CD8-positive, alpha-beta T cell (primary cell): ENCODE measurements at regions of chr16 and their contacts with region 1.

Region 1: GRCh38 chr16:67183627-67184328 is at the start of gene MATCAP1:
- DNase-seq: peak; percentile 84 to 98 (median 92)
- ATAC-seq: peak; percentile 96
- H3K4me3 ChIP-seq: peak within 1 kb of the TSS; percentile 65 to 76
- H3K4me3 Mint-ChIP-seq: no peak within 1 kb of the TSS
- H3K27ac ChIP-seq: peak within 1 kb of the TSS; percentile 84 to 95
- H3K27ac Mint-ChIP-seq: no peak within 1 kb of the TSS
- H3K4me1 ChIP-seq: peaks cover 20% of the 10 kb centered on the region
- H3K4me1 Mint-ChIP-seq: peaks cover 17% of the 10 kb centered on the region
- H3K27me3 ChIP-seq: peaks cover 0 to 2% of the 10 kb centered on the region in 2 experiments
- H3K27me3 Mint-ChIP-seq: peaks cover 10% of the 10 kb centered on the region
- CTCF ChIP-seq: no peak
- total RNA-seq, gene MATCAP1: 7.7 to 8.0 TPM

Region 2: GRCh38 chr16:66954097-66954659 is 229.6 kb before region 1 on chr16:
- CTCF ChIA-PET with region 1: interaction called, 9 read pairs
- POLR2A ChIA-PET with region 1: no interaction called
- intact Hi-C with region 1: loop called (anchors 1 kb)
- DNase-seq: peak; percentile 56 to 81 (median 74)
- ATAC-seq: peak; percentile 91
- H3K4me3 ChIP-seq: no peak overlapping the region
- H3K4me3 Mint-ChIP-seq: no peak overlapping the region
- H3K27ac ChIP-seq: no peak overlapping the region
- H3K27ac Mint-ChIP-seq: no peak overlapping the region
- H3K4me1 ChIP-seq: peaks cover under 1% of the 10 kb centered on the region
- H3K4me1 Mint-ChIP-seq: peaks cover 6% of the 10 kb centered on the region
- H3K27me3 ChIP-seq: peaks cover 2 to 7% of the 10 kb centered on the region in 2 experiments
- H3K27me3 Mint-ChIP-seq: peaks cover 37% of the 10 kb centered on the region
- CTCF ChIP-seq: peak; percentile 85

Region 3: GRCh38 chr16:67017810-67018488 is 165.8 kb before region 1 on chr16:
- CTCF ChIA-PET with region 1: interaction called, 14 read pairs
- POLR2A ChIA-PET with region 1: interaction called, 3 read pairs
- intact Hi-C with region 1: loop called (anchors 2 kb)
- DNase-seq: peak; percentile 67 to 89 (median 85)
- ATAC-seq: peak; percentile 89
- H3K4me3 ChIP-seq: no peak overlapping the region
- H3K4me3 Mint-ChIP-seq: no peak overlapping the region
- H3K27ac ChIP-seq: no peak overlapping the region
- H3K27ac Mint-ChIP-seq: no peak overlapping the region
- H3K4me1 ChIP-seq: peaks cover 15% of the 10 kb centered on the region
- H3K4me1 Mint-ChIP-seq: no peaks in the 10 kb centered on the region
- H3K27me3 ChIP-seq: peaks cover 0 to 18% of the 10 kb centered on the region in 2 experiments
- H3K27me3 Mint-ChIP-seq: no peaks in the 10 kb centered on the region
- CTCF ChIP-seq: peak; percentile 63

Region 4: GRCh38 chr16:67104061-67104460 is 79.7 kb before region 1 on chr16:
- CTCF ChIA-PET with region 1: interaction called, 15 read pairs
- POLR2A ChIA-PET with region 1: no interaction called
- intact Hi-C with region 1: loop called in 1 of 2 experiments (anchors 2 kb)
- DNase-seq: peak in 2 of 9 experiments; percentile 9 to 10
- ATAC-seq: no peak
- H3K4me3 ChIP-seq: no peak overlapping the region
- H3K4me3 Mint-ChIP-seq: no peak overlapping the region
- H3K27ac ChIP-seq: no peak overlapping the region
- H3K27ac Mint-ChIP-seq: no peak overlapping the region
- H3K4me1 ChIP-seq: peaks cover 3% of the 10 kb centered on the region
- H3K4me1 Mint-ChIP-seq: no peaks in the 10 kb centered on the region
- H3K27me3 ChIP-seq: no peaks in the 10 kb centered on the region
- H3K27me3 Mint-ChIP-seq: no peaks in the 10 kb centered on the region
- CTCF ChIP-seq: no peak

Region 5: DNA sequence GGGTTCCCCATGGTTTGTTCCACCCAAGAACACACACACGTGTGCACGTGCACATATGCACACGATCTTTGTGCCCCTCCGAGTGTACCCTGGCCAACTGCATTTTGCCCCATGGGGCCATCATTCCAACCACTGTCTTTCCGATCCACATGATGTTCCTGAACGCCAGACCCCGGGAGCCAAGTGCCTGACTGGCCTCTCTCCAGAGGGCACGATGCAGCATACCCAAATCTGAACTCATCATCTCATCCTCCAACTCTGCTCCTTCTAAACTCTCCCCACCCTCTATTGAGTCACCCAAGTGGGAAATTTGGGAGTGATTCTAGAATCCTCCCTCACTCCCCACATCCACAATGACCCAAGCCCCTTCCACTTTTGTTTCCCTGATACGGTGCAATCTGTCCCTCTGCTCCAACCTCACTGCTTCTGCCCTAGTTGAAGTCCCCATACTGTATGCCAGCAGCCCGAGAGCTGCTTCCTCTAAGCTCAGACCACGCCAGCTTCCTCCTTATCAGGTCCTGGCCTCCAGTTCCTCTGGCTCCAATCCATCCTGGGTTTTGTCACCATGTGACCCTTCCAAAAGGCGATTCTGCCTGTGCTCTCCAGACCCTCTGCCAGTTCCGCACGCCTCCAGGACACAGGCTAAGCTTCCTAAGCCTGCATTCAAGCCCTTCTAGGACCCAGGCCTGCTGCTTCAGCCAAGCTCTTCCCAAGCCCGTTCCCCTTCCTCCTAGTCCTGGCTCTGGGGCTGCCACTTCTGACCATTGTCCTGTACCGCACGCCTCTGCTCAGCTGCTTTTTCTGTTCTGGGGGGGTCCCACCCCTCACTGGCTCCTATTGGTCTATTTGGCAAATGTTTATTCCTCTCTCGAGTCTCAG is 33.1 kb after region 1 on chr16:
- CTCF ChIA-PET with region 1: no interaction called
- POLR2A ChIA-PET with region 1: no interaction called
- intact Hi-C with region 1: no loop called
- DNase-seq: no peak
- ATAC-seq: no peak
- H3K4me3 ChIP-seq: no peak overlapping the region
- H3K4me3 Mint-ChIP-seq: no peak overlapping the region
- H3K27ac ChIP-seq: no peak overlapping the region
- H3K27ac Mint-ChIP-seq: no peak overlapping the region
- H3K4me1 ChIP-seq: no peaks in the 10 kb centered on the region
- H3K4me1 Mint-ChIP-seq: no peaks in the 10 kb centered on the region
- H3K27me3 ChIP-seq: no peaks in the 10 kb centered on the region
- H3K27me3 Mint-ChIP-seq: no peaks in the 10 kb centered on the region
- CTCF ChIP-seq: no peak

Region 6: DNA sequence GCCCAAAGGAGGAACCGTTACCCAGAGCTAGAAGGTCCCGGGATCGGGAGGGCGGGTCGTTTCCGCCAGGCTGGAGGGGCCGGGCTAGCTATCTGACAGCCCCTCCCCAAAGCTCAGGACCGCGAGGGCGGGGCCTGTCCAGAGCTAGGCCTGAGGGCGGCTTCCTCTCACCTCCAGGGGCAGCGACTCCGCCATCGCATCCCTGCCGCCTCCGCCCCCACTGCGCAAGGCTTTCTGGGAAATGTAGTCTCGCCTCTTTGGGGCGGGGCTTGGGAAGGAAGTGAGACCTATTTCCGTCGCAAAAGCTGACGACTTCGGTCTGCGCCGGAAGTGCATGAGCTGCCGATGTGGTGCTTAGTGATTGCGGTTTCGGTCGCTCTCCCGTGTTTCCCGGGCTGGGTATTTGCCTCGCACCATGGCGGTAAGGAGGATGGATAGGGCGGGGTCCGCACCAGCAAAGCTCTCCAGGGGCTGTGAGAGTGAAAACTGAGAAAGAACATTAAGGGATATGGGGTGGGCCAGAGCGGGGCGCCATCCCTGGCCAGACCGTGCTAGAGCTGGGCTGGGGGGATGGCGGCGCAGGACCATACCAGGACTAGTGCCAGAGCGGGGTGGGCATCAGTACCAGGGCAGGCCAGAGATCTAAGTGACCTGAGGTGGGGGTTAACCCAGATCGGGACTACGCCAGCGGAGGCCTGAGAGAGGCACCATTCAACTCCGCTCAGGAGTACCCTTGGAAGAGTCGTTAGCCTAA is 43.2 kb after region 1 on chr16 and contains the start of gene TMEM208:
- CTCF ChIA-PET with region 1: no interaction called
- POLR2A ChIA-PET with region 1: no interaction called
- intact Hi-C with region 1: loop called (anchors 2 kb)
- DNase-seq: peak; percentile 95 to 99 (median 98)
- ATAC-seq: peak; percentile 98
- H3K4me3 ChIP-seq: peak within 1 kb of the TSS; percentile 95 to 100
- H3K4me3 Mint-ChIP-seq: peak within 1 kb of the TSS; percentile 100
- H3K27ac ChIP-seq: peak within 1 kb of the TSS; percentile 83 to 93
- H3K27ac Mint-ChIP-seq: peak within 1 kb of the TSS; percentile 98
- H3K4me1 ChIP-seq: peaks cover 26% of the 10 kb centered on the region
- H3K4me1 Mint-ChIP-seq: peaks cover 47% of the 10 kb centered on the region
- H3K27me3 ChIP-seq: no peaks in the 10 kb centered on the region
- H3K27me3 Mint-ChIP-seq: no peaks in the 10 kb centered on the region
- CTCF ChIP-seq: no peak
- total RNA-seq, gene TMEM208: 37.1 to 44.7 TPM